ENCODE measurements at regions of chr10 and their contacts with region 1.

Region 1: DNA sequence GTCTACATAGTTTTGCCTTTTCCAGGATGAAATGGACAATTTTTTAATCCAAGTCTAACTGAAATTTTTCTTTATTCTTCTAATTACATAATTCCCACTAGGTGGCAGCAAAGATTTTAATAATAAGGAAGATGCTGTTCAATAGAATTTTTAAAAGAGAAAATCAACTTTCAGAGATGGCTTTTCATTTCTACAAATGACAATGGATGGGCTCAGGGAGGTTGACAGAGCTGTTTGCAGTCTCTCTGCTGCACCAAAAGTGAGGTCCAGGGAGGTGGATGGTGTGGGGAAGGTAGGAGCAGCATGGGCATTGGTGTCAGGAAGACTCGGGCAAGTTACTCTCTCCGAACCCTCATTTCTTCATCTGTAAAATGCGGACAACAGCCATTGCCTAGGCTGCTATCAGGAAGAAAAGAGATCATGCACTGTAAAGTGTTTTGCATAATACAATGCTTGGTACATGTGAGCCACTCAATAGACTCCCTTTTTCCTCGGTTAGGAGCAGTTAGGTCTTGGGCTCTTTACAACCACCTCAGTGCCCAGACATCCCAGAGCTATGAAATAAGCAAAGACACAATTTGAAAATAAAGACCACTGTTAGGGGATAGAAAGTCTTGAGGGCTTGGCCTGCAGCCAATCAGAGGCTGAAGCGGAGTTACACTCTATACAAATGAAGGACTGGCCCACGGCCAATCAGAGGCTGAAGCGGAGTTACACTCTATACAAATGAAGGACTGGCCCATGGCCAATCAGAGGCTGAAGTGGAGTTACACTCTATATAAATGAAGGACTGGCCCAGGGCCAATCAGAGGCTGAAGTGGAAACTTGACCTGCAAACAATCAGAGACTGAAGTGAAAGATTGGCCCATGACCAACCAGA is 107.1 kb downstream of the ABLIM1 start:
- DNase-seq: peak in 3 of 5 donors; percentile 33 to 39 (median 37)
- H3K4me3 ChIP-seq: no peak overlapping the region
- H3K4me3 Mint-ChIP-seq: no peak overlapping the region
- H3K27ac ChIP-seq: no peak overlapping the region
- H3K27ac Mint-ChIP-seq: peak overlapping the region in 4 of 7 donors; percentile 4 to 83 (median 40)
- H3K4me1 ChIP-seq: peaks cover 33% of the 10 kb centered on the region
- H3K4me1 Mint-ChIP-seq: peaks cover 13 to 28% (median 20%) of the 10 kb centered on the region in 4 donors
- H3K27me3 ChIP-seq: no peaks in the 10 kb centered on the region
- H3K27me3 Mint-ChIP-seq: no peaks in the 10 kb centered on the region

Region 2: GRCh38 chr10:114492351-114493037 is 58.5 kb before region 1 on chr10:
- CTCF ChIA-PET with region 1: interaction called, 14 read pairs
- POLR2A ChIA-PET with region 1: interaction called, 85 read pairs
- intact Hi-C with region 1: no loop called
- DNase-seq: peak; percentile 20 to 54 (median 39)
- H3K4me3 ChIP-seq: no peak overlapping the region
- H3K4me3 Mint-ChIP-seq: peak overlapping the region in 7 of 8 donors; percentile 10 to 68 (median 59)
- H3K27ac ChIP-seq: no peak overlapping the region
- H3K27ac Mint-ChIP-seq: peak overlapping the region; percentile 15 to 84 (median 80)
- H3K4me1 ChIP-seq: peaks cover 53% of the 10 kb centered on the region
- H3K4me1 Mint-ChIP-seq: peaks cover 40 to 62% (median 54%) of the 10 kb centered on the region in 4 donors
- H3K27me3 ChIP-seq: no peaks in the 10 kb centered on the region
- H3K27me3 Mint-ChIP-seq: no peaks in the 10 kb centered on the region

Region 3: GRCh38 chr10:114694752-114695151 is 143.8 kb after region 1 on chr10:
- CTCF ChIA-PET with region 1: interaction called, 20 read pairs
- POLR2A ChIA-PET with region 1: no interaction called
- intact Hi-C with region 1: loop called (anchors 1 kb)
- DNase-seq: peak in 3 of 5 donors; percentile 12 to 18 (median 12)
- H3K4me3 ChIP-seq: no peak overlapping the region
- H3K4me3 Mint-ChIP-seq: peak overlapping the region in 1 of 8 donors; percentile 4
- H3K27ac ChIP-seq: no peak overlapping the region
- H3K27ac Mint-ChIP-seq: no peak overlapping the region
- H3K4me1 ChIP-seq: peaks cover 15% of the 10 kb centered on the region
- H3K4me1 Mint-ChIP-seq: peaks cover 0 to 11% (median 4%) of the 10 kb centered on the region in 4 donors
- H3K27me3 ChIP-seq: no peaks in the 10 kb centered on the region
- H3K27me3 Mint-ChIP-seq: peaks cover 5 to 7% of the 10 kb centered on the region in 2 donors

Region 4: DNA sequence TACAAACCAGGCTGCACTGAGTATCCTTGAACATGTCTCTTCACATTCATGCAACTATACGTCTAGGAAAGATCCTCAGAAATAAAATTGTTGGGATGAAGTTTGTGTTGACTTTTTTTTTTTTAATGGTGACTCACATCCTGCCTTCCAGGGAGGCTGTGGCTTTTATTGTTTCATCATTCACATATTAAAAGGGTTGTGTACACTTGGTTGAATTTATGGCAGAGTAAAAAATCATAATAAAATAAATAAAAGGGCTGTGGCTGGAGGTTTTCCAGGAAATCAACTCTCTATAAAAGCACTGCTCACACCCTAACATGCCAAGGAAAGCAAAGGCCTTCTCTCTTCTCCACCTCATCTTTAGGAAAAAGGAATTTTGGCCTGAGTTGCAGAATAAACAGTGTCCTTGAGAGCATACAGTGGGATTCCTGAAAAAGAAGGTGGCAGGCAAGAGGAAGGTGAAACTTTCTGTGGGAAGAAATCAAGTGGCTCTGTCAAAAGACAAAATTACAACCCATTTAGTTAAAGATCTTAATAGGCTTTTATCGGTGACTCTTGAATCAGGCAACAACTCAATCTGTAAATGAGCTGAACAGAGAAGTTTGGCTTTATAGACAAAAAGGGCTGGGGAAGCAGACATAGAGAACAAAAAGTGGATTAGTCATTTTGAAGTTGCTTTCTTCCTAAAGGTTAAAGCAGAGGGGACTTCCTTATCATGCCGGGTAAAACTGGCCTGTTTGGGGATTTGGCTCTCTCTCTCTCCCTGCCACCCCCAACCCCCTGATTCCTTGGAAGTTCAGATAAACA is 229.0 kb after region 1 on chr10:
- CTCF ChIA-PET with region 1: interaction called, 57 read pairs
- POLR2A ChIA-PET with region 1: no interaction called
- intact Hi-C with region 1: no loop called
- DNase-seq: no peak
- H3K4me3 ChIP-seq: no peak overlapping the region
- H3K4me3 Mint-ChIP-seq: no peak overlapping the region
- H3K27ac ChIP-seq: no peak overlapping the region
- H3K27ac Mint-ChIP-seq: no peak overlapping the region
- H3K4me1 ChIP-seq: no peaks in the 10 kb centered on the region
- H3K4me1 Mint-ChIP-seq: peaks cover 0 to 1% (median 0%) of the 10 kb centered on the region in 4 donors
- H3K27me3 ChIP-seq: peaks cover 4% of the 10 kb centered on the region
- H3K27me3 Mint-ChIP-seq: no peaks in the 10 kb centered on the region